ENCODE measurements at regions of chr3 and their contacts with region 1.

Region 1: DNA sequence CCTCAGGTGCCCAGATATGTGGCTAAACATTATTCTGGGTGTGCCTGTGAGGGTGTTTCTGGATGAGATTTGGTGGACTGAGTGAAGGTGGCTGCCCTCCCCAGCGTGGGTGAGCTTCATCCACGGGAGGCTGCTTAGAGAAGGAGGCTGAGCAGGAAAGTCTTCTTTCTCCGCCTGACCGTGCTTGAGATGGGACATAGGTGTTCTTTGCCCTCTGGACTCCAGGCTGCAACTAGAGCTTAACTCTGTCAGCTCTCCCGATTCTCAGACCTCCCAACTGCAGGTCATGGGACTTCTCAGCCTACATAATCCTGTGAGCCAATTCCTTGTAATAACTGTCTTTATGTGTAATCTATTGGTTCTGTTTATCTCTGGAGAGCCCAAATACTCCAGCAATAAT is 34.1 kb downstream of the RAB7A start:
- DNase-seq: no peak
- CTCF ChIP-seq: no peak

Region 2: GRCh38 chr3:128745742-128746141 is 14.3 kb before region 1 on chr3:
- CTCF ChIA-PET with region 1: interaction called, 20 read pairs
- POLR2A ChIA-PET with region 1: no interaction called
- DNase-seq: no peak
- CTCF ChIP-seq: no peak